Activated naive CD4-positive, alpha-beta T cell treated with anti-CD3 and anti-CD28 coated beads, Interleukin-2, amount 10 ng/mL, durations not matched to agents 7 days and 5 days (primary cell): ENCODE measurements at regions of chr1 and their contacts with region 1.

Region 1: GRCh38 chr1:156618853-156619581 is at the start of gene HAPLN2:
- DNase-seq: peak; percentile 52
- H3K4me3 Mint-ChIP-seq: no peak within 1 kb of the TSS
- H3K27ac Mint-ChIP-seq: no peak within 1 kb of the TSS
- H3K4me1 Mint-ChIP-seq: no peaks in the 10 kb centered on the region
- H3K27me3 Mint-ChIP-seq: peaks cover 90% of the 10 kb centered on the region

Region 2: DNA sequence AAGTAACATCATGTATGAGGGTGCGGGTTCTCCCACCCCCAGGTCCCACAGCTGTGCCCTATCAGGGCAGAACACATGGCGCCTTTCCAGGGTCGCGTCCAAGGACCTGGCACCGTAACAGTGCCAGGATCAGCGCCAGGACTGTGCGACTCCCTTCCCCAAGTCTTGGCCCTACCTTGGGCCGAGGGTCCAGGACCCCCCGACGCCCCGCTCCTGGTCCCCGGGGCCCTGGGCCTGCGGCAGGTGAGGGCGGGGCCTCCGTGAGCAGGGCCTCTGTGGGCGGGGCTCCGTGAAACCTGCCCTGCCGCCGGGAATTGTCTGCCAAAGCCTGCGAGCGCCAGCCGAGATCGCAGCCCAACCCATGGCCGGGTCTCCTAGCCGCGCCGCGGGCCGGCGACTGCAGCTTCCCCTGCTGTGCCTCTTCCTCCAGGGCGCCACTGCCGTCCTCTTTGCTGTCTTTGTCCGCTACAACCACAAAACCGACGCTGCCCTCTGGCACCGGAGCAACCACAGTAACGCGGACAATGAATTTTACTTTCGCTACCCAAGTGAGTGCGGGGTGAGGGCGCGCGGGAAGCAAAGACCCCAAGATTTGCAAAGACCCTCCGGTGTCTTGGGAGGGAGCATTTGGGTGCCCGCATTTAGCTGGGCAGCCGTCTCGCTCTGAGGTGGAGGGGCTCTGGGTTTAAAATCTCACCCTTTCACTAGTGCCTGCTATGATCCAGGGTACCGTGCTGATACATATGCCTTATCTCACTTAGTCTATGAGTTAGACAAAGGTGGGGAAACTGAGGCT is 249.9 kb before region 1 on chr1 and contains the start of gene RHBG:
- CTCF ChIA-PET with region 1: no interaction called
- DNase-seq: peak; percentile 40
- H3K4me3 Mint-ChIP-seq: peak within 1 kb of the TSS; percentile 55
- H3K27ac Mint-ChIP-seq: no peak within 1 kb of the TSS
- H3K4me1 Mint-ChIP-seq: peaks cover 3% of the 10 kb centered on the region
- H3K27me3 Mint-ChIP-seq: peaks cover 92% of the 10 kb centered on the region

Region 3: DNA sequence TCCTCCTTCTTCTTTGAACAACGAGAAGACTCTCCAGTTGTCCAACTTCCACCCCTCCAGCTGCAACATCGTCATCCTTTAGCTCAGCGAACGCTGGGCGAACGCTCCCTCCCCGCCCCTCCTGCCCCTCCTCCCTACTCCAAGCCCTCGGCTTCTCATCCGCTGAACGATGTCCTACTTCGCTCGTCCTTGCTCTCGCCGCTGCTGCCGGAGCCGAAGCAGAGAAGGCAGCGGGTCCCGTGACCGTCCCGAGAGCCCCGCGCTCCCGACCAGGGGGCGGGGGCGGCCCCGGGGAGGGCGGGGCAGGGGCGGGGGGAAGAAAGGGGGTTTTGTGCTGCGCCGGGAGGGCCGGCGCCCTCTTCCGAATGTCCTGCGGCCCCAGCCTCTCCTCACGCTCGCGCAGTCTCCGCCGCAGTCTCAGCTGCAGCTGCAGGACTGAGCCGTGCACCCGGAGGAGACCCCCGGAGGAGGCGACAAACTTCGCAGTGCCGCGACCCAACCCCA is 22.8 kb after region 1 on chr1 and contains the start of gene BCAN:
- CTCF ChIA-PET with region 1: interaction called, 16 read pairs
- DNase-seq: peak; percentile 38
- H3K4me3 Mint-ChIP-seq: no peak within 1 kb of the TSS
- H3K27ac Mint-ChIP-seq: peak within 1 kb of the TSS; percentile 68
- H3K4me1 Mint-ChIP-seq: peaks cover 33% of the 10 kb centered on the region
- H3K27me3 Mint-ChIP-seq: peaks cover 94% of the 10 kb centered on the region

Region 4: GRCh38 chr1:156677616-156678596 is 58.9 kb after region 1 on chr1:
- CTCF ChIA-PET with region 1: interaction called, 82 read pairs
- DNase-seq: peak; percentile 49
- H3K4me3 Mint-ChIP-seq: no peak overlapping the region
- H3K27ac Mint-ChIP-seq: no peak overlapping the region
- H3K4me1 Mint-ChIP-seq: peaks cover 9% of the 10 kb centered on the region
- H3K27me3 Mint-ChIP-seq: peaks cover 98% of the 10 kb centered on the region